ENCODE measurements at regions of chr19 and their contacts with region 1.

Region 1: DNA sequence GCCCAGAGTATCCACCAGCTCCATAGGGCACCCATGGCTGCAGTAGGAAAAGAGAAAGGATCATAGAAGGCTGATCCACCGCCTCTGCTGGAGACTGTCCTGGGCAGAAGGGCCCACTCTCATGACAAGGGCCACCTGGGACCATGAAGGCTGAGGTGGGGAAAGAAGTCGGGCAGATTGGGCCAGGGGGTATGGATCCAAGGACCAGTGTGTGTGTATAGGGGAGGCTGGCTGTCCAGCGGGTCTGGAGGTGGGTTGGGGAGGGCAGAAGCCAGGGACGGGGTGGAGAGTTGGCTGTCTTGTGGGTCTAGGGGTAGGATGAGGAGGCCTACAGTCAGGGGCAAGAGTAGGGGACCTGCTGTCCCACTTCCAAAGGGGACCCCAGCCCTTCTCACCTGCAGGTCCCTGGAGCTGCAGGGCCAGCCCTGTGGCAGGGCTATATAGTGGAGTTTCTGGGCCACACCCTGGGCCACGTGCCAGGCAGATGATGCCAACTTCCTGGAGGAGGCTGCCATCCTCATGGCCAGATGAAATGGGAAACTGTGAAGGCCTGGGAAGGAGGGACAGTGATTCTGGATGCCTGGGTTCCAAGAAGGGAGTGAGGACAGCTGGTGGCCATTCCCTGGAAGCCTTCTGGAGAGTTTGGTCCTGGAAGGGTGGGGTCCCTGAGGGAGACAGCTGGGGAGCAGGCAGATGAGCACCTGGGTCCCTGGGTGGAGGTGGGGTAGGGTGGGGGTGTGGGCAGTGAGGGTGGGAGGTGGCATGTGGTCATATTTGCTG is at the start of gene FCGBP:
- DNase-seq: no peak
- H3K4me3 ChIP-seq: no peak within 1 kb of the TSS
- H3K27ac ChIP-seq: no peak within 1 kb of the TSS
- H3K4me1 ChIP-seq: no peaks in the 10 kb centered on the region
- H3K27me3 ChIP-seq: no peaks in the 10 kb centered on the region
- CTCF ChIP-seq: no peak
- POLR2A ChIP-seq: no peak
- total RNA-seq, gene FCGBP: 31.7 TPM

Region 2: GRCh38 chr19:39795001-39795400 is 139.8 kb before region 1 on chr19:
- intact Hi-C with region 1: no loop called
- DNase-seq: no peak
- H3K4me3 ChIP-seq: no peak overlapping the region
- H3K27ac ChIP-seq: no peak overlapping the region
- H3K4me1 ChIP-seq: no peaks in the 10 kb centered on the region
- H3K27me3 ChIP-seq: no peaks in the 10 kb centered on the region
- CTCF ChIP-seq: no peak
- POLR2A ChIP-seq: no peak

Region 3: GRCh38 chr19:41711376-41712261 is 1776.8 kb after region 1 on chr19:
- intact Hi-C with region 1: loop called (anchors 5 kb)
- DNase-seq: peak; percentile 65 to 72
- H3K4me3 ChIP-seq: no peak overlapping the region
- H3K27ac ChIP-seq: no peak overlapping the region
- H3K4me1 ChIP-seq: no peaks in the 10 kb centered on the region
- H3K27me3 ChIP-seq: no peaks in the 10 kb centered on the region
- CTCF ChIP-seq: no peak
- POLR2A ChIP-seq: no peak

Measured in vagina (tissue), 2 donors.